ENCODE measurements at regions of chr16 and their contacts with region 1.

Region 1: GRCh38 chr16:75361936-75362335 is 71.4 kb downstream of the CFDP1 start:
- DNase-seq: no peak
- H3K4me3 ChIP-seq: no peak overlapping the region
- CTCF ChIP-seq: no peak

Region 2: GRCh38 chr16:75372236-75372856 is 10.4 kb after region 1 on chr16:
- CTCF ChIA-PET with region 1: interaction called, 10 read pairs
- POLR2A ChIA-PET with region 1: no interaction called
- DNase-seq: no peak
- H3K4me3 ChIP-seq: no peak overlapping the region
- CTCF ChIP-seq: no peak